Colonic mucosa (tissue), 4 donors: ENCODE measurements at regions of chr11 and their contacts with region 1.

Region 1: DNA sequence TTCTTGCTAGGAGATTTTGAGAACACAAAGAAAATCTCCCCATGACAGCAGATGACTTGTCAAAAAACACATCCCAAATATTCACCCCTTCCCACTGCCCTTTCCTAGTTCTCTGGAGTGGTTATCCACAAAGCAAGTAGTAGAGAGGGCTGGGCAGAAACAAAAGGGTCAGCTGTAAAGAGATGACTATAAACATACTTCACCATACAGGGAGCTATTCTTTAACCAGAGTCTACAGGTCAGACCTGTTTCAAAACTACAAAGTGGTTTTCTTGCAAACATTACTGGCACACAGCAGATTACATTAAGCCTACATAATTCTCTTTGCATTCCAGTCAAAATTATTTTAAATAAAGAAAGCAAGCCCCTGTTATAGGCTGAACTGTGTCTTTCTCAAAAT is 47.7 kb upstream of the NFRKB start:
- DNase-seq: no peak
- H3K4me3 ChIP-seq: no peak overlapping the region
- H3K27ac ChIP-seq: no peak overlapping the region
- H3K4me1 ChIP-seq: no peaks in the 10 kb centered on the region
- H3K27me3 ChIP-seq: no peaks in the 10 kb centered on the region
- CTCF ChIP-seq: no peak

Region 2: DNA sequence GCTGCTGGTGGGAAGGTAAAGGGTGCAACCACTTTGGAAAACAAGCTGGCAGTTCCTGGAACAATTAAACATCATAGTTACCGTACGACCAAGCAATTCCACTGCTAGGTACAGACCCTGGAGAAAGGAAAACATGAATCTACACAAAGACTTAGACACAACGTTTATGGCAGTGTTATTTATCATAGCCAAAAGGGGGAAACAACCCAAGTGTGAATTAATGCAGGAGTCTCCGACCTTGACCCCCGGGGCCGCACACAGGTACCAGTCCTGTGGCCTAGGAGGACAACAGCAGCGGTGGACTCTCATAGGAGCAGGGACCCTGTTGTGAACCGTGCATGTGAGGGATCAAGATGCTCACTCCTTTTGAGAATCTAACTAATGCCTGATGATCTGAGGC is 37.0 kb after region 1 on chr11:
- intact Hi-C with region 1: loop called (anchors 5 kb)
- DNase-seq: no peak
- H3K4me3 ChIP-seq: no peak overlapping the region
- H3K27ac ChIP-seq: no peak overlapping the region
- H3K4me1 ChIP-seq: no peaks in the 10 kb centered on the region
- H3K27me3 ChIP-seq: no peaks in the 10 kb centered on the region
- CTCF ChIP-seq: no peak